Prostate gland (tissue), 2 donors: ENCODE measurements at regions of chr10 and their contacts with region 1.

Region 1: DNA sequence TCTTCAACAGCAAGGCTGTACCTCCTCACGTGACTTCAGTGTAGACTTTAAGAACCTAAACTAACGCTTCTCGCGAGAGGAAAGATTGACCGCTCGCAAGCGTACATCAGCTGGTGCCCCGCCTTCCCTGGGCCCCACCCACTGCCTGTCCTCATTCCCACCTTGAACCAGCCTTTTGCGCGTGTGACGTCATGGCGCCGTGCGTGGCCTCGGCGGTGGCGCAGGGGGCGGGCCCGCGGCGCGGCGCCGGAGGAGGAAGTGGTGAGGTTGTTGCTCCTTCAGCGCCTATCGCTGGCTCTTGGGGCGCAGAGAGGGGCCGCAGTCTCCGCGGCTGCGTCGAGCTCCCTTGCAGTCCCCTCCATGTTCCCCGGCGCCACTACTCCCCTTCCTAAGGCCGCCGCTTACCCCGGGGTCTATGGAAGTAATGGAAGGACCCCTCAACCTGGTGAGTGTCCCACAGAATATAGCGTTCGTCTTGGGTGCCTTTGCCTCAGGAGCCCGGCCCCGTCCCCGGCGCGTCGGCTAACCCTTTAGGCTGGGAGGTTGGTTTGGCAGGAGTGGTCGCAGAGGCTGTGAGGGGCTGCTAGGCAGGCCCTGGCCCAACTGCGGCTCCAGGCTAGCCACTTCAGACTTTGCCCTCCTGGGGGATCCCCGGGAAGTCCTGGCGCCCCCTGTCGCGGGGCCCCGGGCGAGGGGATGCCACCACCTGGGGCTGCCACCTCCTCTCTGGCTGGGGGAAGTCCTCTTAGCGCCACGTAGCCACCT is at the start of gene NRBF2:
- DNase-seq: peak; percentile 93
- H3K4me3 ChIP-seq: peak within 1 kb of the TSS; percentile 96 to 97
- H3K27ac ChIP-seq: peak within 1 kb of the TSS; percentile 90 to 93
- H3K4me1 ChIP-seq: no peaks in the 10 kb centered on the region
- H3K27me3 ChIP-seq: no peaks in the 10 kb centered on the region
- CTCF ChIP-seq: peak in 2 of 4 experiments; percentile 13 to 15
- POLR2A ChIP-seq: peak; percentile 97
- total RNA-seq, gene NRBF2: 15.7 to 20.6 TPM

Region 2: DNA sequence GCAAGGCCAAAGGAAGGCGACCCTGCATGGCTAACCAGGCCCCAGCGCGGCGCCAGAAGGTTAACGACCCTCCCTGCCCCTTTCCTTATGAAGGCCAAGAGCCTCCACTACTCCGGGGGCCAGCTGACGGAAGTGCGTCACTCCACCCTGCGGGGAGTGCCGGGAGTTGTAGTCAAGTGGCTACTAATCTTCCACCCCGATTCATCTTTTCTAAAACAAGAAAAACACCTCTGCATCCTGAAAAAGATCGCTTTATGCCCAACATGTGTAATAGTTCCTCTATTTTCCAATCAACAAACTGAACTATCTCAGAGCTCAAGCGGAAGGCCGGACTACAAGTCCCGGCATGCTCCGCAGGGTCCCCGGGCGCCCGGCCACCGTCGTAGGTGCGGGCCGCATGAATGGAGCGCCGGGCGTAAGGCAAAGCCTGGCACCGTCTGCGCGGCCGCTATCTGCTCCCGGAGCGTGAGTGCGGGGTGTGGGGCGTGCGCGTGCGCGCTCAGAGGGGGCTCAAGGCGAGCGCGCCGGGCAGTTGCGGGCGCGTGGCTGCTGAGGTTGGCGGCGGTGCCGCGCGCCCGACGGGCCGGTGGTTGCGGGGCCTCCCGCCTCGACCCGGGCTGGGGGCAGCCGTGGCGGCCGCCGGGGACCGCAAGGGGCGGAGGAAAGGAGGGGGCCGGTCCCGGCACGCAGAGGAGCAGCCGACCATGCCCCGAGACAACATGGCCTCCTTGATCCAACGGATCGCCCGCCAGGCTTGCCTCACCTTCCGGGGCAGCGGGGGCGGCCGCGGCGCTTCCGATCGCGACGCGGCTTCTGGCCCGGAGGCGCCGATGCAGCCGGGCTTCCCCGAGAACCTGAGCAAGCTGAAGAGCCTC is 328.6 kb before region 1 on chr10 and contains the start of gene ADO:
- intact Hi-C with region 1: loop called (anchors 10 kb)
- DNase-seq: peak; percentile 70
- H3K4me3 ChIP-seq: peak within 1 kb of the TSS; percentile 74 to 79
- H3K27ac ChIP-seq: peak within 1 kb of the TSS; percentile 89 to 94
- H3K4me1 ChIP-seq: peaks cover 3% of the 10 kb centered on the region
- H3K27me3 ChIP-seq: no peaks in the 10 kb centered on the region
- CTCF ChIP-seq: peak in 1 of 4 experiments; percentile 10
- POLR2A ChIP-seq: no peak
- total RNA-seq, gene ADO: 25.0 to 37.4 TPM

Region 3: DNA sequence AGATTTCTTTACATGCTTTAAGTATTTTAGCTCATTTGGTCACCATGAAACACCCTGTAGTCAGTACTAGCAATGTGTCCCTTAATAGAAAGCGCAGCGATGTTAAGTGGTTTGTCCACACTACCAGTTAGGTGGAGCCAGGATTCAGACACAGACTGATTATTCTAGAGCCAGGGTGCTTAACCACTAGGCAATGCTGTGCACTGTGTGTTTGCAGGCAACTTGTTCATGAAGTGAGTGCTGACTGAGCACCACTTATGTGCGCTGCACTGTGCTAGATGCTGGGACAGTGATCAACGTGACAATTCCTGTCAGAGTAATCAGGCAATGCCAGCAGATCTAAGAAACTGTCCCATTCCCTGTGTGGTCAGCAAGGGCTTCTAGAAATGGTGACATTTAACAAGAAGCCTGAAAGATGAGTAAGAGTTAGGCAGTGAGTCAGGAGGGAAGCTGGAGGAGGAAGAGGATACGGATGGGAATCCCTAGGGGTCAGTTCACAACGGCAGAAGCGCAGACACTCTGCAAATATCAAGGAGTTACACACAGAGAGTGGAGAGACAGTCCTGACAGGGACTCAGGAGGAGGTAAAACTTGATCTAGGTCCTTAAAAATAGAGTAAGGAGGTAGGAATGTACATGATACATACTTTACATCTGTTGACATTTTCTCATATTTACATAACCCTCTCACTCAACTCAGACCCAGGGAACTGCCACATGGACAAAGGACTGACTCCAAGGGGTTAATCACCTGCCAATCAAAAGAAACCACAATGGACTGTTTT is 247.4 kb before region 1 on chr10:
- intact Hi-C with region 1: no loop called
- DNase-seq: no peak
- H3K4me3 ChIP-seq: no peak overlapping the region
- H3K27ac ChIP-seq: no peak overlapping the region
- H3K4me1 ChIP-seq: no peaks in the 10 kb centered on the region
- H3K27me3 ChIP-seq: no peaks in the 10 kb centered on the region
- CTCF ChIP-seq: no peak
- POLR2A ChIP-seq: no peak